GM10248 (cell line): ENCODE measurements at regions of chr10 and their contacts with region 1.

Region 1: DNA sequence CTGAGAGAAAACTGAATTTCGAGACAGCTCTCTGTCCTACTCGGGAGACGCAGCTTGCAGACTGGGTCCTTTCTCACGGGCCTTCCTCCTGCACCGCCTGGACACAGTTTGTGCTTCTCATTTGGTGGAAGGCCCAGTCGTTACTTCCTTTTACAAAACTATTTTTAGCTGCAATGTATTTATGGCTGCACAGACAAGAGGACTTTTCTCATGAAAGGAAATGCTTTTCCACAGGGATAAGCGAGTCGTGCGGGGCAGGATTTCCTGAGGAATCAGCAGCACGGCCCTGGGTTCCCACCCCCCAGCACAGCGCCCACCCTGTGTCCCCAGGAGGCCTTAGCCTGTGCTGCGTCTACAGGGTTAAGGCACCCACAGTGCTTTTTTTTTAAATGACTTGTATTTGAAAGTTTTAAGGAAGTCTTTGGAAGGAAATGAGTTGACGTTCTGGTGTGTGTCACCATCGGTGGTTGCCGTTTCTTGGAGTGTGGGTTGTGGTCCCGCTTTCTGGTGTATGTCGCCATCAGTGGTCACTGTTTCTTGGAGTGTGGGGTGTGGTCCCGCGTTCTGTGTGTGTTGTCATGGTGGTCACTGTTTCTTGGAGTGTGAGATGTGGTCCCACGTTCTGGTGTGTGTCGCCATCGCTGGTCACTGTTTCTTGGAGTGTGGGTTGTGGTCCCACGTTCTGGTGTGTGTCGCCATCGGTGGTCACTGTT is 50.9 kb downstream of the INPP5A start:
- DNase-seq: no peak
- CTCF ChIP-seq: no peak

Region 2: GRCh38 chr10:132571650-132572535 is 16.6 kb before region 1 on chr10:
- CTCF ChIA-PET with region 1: interaction called, 10 read pairs
- POLR2A ChIA-PET with region 1: no interaction called
- DNase-seq: peak; percentile 86
- CTCF ChIP-seq: no peak

Region 3: GRCh38 chr10:132654702-132655661 is 66.5 kb after region 1 on chr10:
- CTCF ChIA-PET with region 1: no interaction called
- POLR2A ChIA-PET with region 1: no interaction called
- DNase-seq: peak; percentile 84
- CTCF ChIP-seq: peak; percentile 88